ENCODE measurements at regions of chr15 and their contacts with region 1.

Region 1: DNA sequence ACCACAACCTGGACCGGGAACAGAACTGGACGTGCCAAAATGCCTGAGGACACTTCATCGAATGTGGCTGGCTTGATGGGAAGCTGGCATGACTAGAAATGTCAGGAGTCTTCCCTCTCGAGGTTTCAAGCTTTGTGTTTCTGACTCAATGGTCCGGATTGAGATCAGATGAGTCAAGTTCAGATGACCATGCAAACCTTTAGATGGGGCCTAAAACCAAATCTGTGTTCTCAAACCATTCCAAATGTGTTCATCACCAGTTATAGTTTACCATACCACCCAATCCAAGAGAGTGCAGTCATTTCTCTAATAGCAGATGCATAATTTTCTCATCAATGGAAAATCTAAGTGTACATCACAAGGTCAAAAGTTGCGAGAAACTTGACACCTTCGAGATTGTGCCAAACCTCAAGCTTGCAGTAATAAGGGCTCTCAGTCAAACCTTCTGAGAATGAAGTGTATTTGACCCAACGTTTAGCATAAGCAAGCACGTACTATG is 369.1 kb downstream of the RORA start:
- DNase-seq: peak; percentile 91
- ATAC-seq: peak; percentile 90
- H3K4me3 ChIP-seq: no peak overlapping the region
- H3K27ac ChIP-seq: no peak overlapping the region
- H3K4me1 ChIP-seq: peaks cover 3% of the 10 kb centered on the region; the same call in 1 of the 2 replicates
- H3K27me3 ChIP-seq: peaks cover 6% of the 10 kb centered on the region; the same call in 1 of the 2 replicates
- CTCF ChIP-seq: no peak
- POLR2A ChIP-seq: no peak
- RAD21 ChIP-seq: no peak

Region 2: GRCh38 chr15:60673918-60674558 is 186.0 kb before region 1 on chr15:
- CTCF ChIA-PET with region 1: no interaction called
- POLR2A ChIA-PET with region 1: interaction called, 20 read pairs
- dilution Hi-C with region 1: no loop called
- in situ Hi-C with region 1: no loop called
- intact Hi-C with region 1: no loop called
- DNase-seq: peak; percentile 96
- ATAC-seq: peak; percentile 79
- H3K4me3 ChIP-seq: no peak overlapping the region
- H3K27ac ChIP-seq: no peak overlapping the region
- H3K4me1 ChIP-seq: peaks cover 3% of the 10 kb centered on the region
- H3K27me3 ChIP-seq: no peaks in the 10 kb centered on the region; the same call in 1 of the 2 replicates
- CTCF ChIP-seq: no peak
- POLR2A ChIP-seq: no peak
- RAD21 ChIP-seq: no peak; the same call in 1 of the 2 replicates